ENCODE measurements at regions of chr17 and their contacts with region 1.

Region 1: DNA sequence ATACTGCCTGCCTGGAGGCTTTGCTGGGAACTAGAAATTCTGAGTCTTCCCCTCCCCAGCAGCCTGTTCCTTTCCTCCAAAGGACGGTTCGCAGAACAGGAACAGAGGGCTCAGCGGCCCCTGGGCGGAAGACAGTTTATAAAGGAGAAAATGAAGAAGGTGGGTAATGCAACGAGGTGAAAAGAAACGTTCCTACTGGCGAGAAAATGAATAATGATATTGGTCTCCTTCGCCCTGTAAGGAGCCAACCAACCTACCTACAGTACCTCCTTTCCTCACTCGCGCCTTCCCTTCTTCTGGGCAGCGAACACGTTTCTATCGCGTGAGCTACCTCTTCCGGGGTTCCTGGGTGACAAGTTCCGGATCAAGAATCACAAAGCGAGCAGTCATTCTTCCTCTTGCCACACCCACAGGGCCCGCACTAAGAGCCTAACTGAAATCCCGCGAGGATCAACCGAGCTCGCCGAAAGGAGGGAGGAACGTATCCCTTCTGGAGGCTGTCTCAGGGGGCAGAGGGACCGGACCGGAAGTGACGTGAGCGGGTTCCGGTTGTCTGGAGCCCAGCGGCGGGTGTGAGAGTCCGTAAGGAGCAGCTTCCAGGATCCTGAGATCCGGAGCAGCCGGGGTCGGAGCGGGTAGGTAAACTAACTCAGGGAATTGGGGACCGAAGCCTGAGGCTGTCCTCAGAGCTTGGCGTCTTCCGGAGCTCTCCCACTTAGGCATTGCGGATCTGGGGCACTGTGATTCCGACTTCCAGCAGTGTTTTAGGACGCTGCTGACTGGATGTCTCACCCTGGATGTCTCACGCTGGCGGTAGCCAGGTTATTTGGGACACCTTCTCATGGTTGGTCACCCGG is at the starts of genes PTRH2 and VMP1:
- DNase-seq: peak; percentile 67 to 98 (median 81)
- ATAC-seq: peak; percentile 90
- H3K4me3 ChIP-seq: peak within 1 kb of the TSS; percentile 95
- H3K4me3 Mint-ChIP-seq: peak within 1 kb of the TSS; percentile 93
- H3K27ac ChIP-seq: peak within 1 kb of the TSS; percentile 80 to 96
- H3K27ac Mint-ChIP-seq: peak within 1 kb of the TSS; percentile 94
- H3K4me1 ChIP-seq: peaks cover 37% of the 10 kb centered on the region
- H3K4me1 Mint-ChIP-seq: peaks cover 81% of the 10 kb centered on the region
- H3K27me3 ChIP-seq: no peaks in the 10 kb centered on the region
- H3K27me3 Mint-ChIP-seq: no peaks in the 10 kb centered on the region
- CTCF ChIP-seq: no peak
- total RNA-seq, gene PTRH2: 6.5 to 7.3 TPM
- total RNA-seq, gene VMP1: 73.6 to 81.1 TPM

Region 2: GRCh38 chr17:59641799-59642489 is 65.4 kb before region 1 on chr17:
- CTCF ChIA-PET with region 1: interaction called, 3 read pairs
- POLR2A ChIA-PET with region 1: interaction called, 3 read pairs
- intact Hi-C with region 1: loop called in 1 of 2 experiments (anchors 10 kb)
- DNase-seq: peak in 3 of 14 experiments; percentile 41 to 63 (median 49)
- ATAC-seq: peak; percentile 89
- H3K4me3 ChIP-seq: no peak overlapping the region
- H3K4me3 Mint-ChIP-seq: peak overlapping the region; percentile 32
- H3K27ac ChIP-seq: no peak overlapping the region
- H3K27ac Mint-ChIP-seq: peak overlapping the region; percentile 62
- H3K4me1 ChIP-seq: peaks cover 23% of the 10 kb centered on the region
- H3K4me1 Mint-ChIP-seq: peaks cover 63% of the 10 kb centered on the region
- H3K27me3 ChIP-seq: no peaks in the 10 kb centered on the region
- H3K27me3 Mint-ChIP-seq: no peaks in the 10 kb centered on the region
- CTCF ChIP-seq: no peak

Region 3: DNA sequence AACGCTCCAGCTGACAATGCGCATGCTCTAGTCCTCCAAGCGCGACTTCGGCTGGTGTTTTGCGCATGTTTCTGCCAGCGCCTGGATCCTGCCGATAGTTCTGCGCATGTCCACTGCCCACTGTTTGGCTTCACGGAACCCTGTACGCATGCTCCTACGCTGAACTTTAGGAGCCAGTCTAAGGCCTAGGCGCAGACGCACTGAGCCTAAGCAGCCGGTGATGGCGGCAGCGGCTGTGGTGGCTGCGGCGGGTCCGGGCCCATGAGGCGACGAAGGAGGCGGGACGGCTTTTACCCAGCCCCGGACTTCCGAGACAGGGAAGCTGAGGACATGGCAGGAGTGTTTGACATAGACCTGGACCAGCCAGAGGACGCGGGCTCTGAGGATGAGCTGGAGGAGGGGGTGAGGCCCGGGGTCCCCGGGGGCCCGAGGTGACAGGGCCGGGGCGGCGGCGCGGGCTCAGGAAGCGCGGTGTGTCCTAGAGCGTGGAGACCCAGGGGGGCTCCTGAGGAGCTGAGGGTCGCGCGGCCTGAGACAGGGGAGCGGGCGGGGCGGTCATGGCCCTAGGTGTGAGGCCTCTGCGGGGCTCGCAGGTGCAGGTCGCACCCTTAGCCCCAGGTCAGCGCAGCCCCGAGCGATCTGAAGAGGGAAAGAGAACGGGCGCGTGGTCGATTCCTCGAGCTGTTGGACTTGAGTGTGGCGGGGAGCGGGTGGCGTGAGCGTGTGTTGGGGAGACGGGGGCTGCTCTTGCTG is 185.8 kb after region 1 on chr17 and contains the starts of genes RPS6KB1 and TUBD1:
- CTCF ChIA-PET with region 1: no interaction called
- POLR2A ChIA-PET with region 1: interaction called, 16 read pairs
- intact Hi-C with region 1: no loop called
- DNase-seq: peak; percentile 94 to 100 (median 97)
- ATAC-seq: peak; percentile 91
- H3K4me3 ChIP-seq: peak within 1 kb of the TSS; percentile 79
- H3K4me3 Mint-ChIP-seq: peak within 1 kb of the TSS; percentile 98
- H3K27ac ChIP-seq: peak within 1 kb of the TSS; percentile 88 to 94
- H3K27ac Mint-ChIP-seq: peak within 1 kb of the TSS; percentile 94
- H3K4me1 ChIP-seq: peaks cover 44% of the 10 kb centered on the region
- H3K4me1 Mint-ChIP-seq: peaks cover 65% of the 10 kb centered on the region
- H3K27me3 ChIP-seq: no peaks in the 10 kb centered on the region
- H3K27me3 Mint-ChIP-seq: no peaks in the 10 kb centered on the region
- CTCF ChIP-seq: no peak
- total RNA-seq, gene RPS6KB1: 129 to 135 TPM
- total RNA-seq, gene TUBD1: 7.3 to 9.4 TPM

Measured in CD4-positive, alpha-beta T cell (primary cell).